Left cardiac atrium (tissue), 4 donors: ENCODE measurements at regions of chr2 and their contacts with region 1.

Region 1: DNA sequence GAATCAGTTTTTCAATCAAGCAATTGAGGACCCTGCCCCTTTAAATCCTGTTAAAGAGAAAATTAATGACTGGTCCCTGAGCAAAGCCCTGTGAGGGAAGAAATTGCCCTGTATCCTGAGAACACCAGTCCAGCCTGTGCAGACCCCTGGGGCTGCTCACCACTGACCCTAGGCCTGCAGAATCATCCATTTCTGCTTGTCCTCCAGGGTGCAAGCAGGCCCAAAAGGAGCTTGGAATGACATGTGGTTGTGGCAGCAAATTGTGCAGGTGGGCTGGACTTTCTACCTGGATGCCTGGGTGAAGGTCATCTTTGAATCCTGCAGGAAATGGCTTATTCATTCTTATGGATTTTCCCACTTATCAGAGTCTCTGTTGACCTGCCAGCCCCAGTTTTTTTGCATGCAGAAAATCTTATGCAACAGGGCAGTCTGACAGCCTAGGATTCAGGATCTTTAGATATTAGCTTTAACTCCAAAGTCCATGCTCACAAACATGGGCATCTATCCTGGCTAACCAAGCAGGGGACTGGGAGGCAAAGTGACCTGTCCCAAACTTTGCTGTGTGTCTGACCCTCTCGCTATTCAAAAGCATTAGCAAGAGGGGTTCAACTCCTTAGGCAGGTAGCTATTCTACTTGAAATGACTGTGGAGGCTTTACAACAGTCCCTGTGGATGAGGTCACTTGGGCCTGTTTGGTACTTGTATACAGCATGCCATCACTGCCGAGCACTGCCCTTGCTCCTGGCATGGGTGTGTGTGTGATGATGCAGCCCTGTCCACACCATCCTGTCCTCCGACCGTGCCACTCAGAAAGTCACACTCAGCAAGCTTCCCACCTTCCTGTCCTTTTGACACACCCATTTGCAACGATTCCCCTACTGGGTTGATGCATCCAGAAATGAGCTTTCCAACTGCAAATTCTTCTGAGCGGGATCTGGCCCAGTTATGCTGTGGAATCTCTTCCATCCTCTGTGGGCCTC is 85.3 kb downstream of the CAPN13 start:
- DNase-seq: no peak
- ATAC-seq: no peak

Region 2: DNA sequence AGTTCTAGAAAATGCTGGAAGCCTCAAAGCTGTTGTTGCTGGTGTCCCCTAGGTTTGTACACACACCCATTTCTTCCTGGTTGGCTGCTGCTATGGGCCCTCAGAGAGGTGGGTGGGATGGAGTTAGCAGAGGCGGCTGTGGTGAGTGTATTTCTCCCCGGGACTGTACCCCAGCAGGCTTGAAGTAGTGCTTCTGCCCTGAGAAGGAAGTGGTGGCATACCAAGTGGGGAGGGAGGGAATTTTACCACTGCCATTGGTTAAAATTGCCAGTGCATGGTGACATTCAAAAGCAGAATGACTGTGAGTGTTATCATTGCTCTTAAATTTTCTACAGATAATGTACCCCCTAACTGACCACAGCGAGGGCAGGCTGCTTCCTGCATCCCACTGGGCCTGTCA is 210.9 kb after region 1 on chr2:
- intact Hi-C with region 1: loop called in 1 of 2 experiments (anchors 10 kb)
- DNase-seq: no peak
- ATAC-seq: no peak